ENCODE measurements at regions of chr3 and their contacts with region 1.

Region 1: GRCh38 chr3:172710664-172711453 is at the start of gene NCEH1:
- DNase-seq: peak; percentile 67 to 98 (median 88)

Region 2: GRCh38 chr3:172673210-172673679 is 37.6 kb before region 1 on chr3:
- intact Hi-C with region 1: loop called (anchors 5 kb)
- DNase-seq: peak in 4 of 10 donors; percentile 15 to 62 (median 24)

Region 3: DNA sequence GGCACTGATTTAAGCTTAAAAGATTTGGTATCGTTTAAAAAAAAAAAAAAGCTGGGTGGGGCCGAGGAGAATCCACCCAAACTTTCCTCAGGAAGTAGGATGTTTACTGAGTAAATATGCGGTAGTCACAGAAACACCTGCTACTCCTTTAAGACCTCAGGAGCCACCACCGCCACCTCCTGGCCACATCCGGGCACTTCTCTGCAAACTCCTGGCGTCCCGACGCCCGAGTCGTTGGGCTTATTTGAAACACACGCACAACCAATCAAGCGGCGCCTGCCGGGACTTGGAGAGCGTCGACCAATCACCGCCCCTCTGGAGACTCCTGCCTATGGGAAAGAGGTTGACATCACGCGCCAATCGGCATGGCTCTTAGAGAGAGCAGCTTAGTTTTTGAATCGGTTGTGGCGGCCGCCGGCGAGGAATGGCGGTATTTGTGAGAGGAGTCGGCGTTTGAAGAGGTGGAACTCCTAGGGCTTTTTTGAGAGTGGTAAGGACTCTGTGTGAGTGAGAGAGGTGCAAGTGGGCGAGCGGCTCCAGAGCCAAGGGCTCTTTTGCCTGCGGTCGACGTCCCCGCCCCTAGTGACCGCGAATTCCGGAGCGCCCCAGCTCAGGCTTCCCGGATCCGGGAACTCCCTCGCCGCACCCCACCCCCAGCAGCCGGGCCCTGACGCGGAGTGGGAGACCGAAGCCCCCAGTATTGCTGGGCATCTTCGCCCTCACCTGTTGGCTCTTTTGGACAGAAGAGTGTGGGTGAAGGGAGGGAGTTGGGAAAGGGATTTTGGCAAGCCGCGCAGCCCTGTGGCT is 39.7 kb after region 1 on chr3 and contains the start of gene ECT2:
- intact Hi-C with region 1: loop called (anchors 2 kb)
- DNase-seq: peak; percentile 97 to 100 (median 98)

Region 4: DNA sequence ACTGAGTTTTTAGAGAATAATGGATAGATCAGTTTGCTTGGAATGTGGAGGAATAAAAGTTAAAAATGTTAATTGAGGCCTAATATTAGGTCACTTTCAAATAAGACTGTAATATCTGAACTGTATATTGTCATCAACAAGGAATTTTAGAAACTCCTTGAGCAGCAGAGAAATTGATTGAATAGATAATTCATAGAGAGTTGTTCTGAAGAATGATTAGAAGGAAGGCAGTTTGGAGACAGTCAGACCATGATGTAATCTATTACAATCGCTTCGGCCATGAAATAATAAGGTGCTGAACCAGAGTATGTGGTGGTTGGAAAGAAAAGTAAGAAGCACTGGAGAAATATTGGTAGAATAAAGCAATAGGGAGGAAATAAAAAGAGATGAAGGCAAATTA is 55.4 kb after region 1 on chr3:
- intact Hi-C with region 1: no loop called
- DNase-seq: no peak